ENCODE measurements at regions of chr10 and their contacts with region 1.

Region 1: DNA sequence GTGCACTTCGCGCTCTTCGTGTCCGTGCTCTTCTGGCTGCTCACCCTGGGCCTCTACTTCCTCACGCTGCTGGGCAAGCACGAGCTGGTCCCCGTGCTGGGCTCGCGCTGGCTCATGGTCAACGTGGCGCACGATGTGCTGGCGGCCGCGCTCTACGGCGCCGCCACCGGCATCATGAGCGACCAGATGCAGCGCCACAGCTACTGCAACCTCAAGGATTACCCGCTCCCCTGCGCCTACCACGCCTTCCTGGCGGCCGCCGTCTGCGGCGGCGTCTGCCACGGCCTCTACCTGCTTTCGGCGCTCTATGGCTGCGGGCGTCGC is 480 bp downstream of the MARVELD1 start:
- DNase-seq: peak; percentile 62
- ATAC-seq: peak; percentile 76
- H3K4me3 Mint-ChIP-seq: peak overlapping the region; percentile 98
- H3K27ac Mint-ChIP-seq: peak overlapping the region; percentile 92
- H3K4me1 Mint-ChIP-seq: peaks cover 6% of the 10 kb centered on the region
- H3K27me3 Mint-ChIP-seq: peaks cover 18% of the 10 kb centered on the region
- CTCF ChIP-seq: no peak

Region 2: GRCh38 chr10:97701438-97702069 is 12.5 kb before region 1 on chr10:
- CTCF ChIA-PET with region 1: interaction called, 65 read pairs
- POLR2A ChIA-PET with region 1: interaction called, 5 read pairs
- intact Hi-C with region 1: no loop called
- DNase-seq: peak; percentile 61
- ATAC-seq: peak; percentile 99
- H3K4me3 Mint-ChIP-seq: no peak overlapping the region
- H3K27ac Mint-ChIP-seq: no peak overlapping the region
- H3K4me1 Mint-ChIP-seq: no peaks in the 10 kb centered on the region
- H3K27me3 Mint-ChIP-seq: no peaks in the 10 kb centered on the region
- CTCF ChIP-seq: peak; percentile 89

Region 3: DNA sequence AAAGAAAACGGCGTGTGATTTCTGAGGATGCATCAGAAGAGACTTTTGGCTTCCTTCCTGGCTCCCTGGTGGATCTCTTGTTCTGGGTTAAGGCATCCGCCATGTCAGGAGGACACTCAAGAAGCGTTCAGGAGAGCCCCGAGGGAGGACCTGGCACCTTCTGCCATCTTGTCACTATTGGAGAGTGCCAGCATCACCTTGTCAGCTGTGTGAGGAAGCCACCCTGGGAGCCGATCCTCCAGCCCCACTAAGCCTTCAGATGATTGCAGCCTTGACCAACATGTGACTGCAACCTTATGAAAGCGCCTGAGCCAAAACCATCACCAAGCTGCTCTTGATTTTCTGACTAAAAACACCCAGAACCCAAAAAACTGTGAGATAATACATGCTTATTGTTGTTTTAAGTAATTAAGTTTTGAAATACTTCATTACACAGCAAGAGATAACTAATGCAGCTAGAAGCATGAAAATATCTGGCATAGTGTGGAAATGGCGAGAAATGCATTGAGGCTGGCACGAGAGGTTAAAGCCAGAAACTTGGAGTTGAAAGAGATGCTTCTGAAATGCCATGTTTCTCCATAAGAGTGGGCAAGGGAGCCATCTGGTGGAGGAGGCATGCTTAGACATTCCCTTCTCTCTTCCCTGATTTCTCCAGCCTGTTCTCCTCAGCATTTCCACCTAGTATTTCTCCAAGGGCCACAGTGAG is 17.5 kb after region 1 on chr10:
- CTCF ChIA-PET with region 1: interaction called, 537 read pairs
- POLR2A ChIA-PET with region 1: interaction called, 19 read pairs
- intact Hi-C with region 1: loop called (anchors 2 kb)
- DNase-seq: peak; percentile 69
- ATAC-seq: peak; percentile 58
- H3K4me3 Mint-ChIP-seq: no peak overlapping the region
- H3K27ac Mint-ChIP-seq: no peak overlapping the region
- H3K4me1 Mint-ChIP-seq: peaks cover 6% of the 10 kb centered on the region
- H3K27me3 Mint-ChIP-seq: peaks cover 3% of the 10 kb centered on the region
- CTCF ChIP-seq: peak; percentile 86

Region 4: DNA sequence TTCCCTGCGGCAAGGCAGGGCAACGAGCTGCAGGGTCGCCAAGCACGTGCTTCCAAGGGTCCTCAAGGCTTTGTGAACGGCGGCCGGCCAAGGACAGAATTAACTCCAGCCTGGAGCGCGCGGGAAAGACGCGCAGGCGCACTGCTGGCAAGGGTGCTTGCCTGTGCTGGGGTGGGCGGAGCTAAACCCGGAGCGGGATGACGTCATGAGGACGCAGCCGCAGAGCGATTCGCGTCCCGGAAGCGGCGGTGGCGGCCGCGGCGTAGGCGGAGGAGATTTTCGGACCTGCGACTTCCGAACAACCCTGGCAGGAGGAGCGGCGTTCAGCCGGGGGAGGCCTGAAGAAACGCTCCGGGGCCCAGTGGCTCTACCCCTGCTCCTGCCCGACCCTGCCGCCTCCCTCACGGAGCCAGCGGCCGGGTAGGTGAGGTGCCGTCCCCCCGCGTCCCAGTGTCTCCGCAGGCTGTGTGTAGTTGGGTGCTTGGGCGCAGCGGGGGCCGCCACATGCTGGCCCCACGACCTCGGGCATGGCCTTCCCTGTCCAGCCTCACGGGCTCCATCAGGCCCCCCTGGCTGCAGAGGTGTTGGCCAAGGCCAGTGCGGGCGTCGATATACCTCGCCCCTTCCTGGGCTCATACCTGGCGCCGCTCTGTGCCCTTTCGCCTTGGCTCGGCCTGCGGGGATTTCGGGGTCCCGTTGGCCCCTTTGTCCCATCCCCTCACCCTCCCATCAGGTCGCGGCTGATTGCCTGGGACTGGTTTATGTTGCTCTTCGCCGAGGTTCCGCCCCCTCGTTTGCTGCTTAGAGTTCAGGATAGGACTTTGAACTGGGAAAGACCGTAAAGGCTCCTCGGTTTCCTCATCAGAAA is 23.1 kb after region 1 on chr10 and contains the start of gene ZFYVE27:
- CTCF ChIA-PET with region 1: interaction called, 537 read pairs
- POLR2A ChIA-PET with region 1: interaction called, 7 read pairs
- intact Hi-C with region 1: no loop called
- DNase-seq: peak; percentile 98
- ATAC-seq: peak; percentile 95
- H3K4me3 Mint-ChIP-seq: peak within 1 kb of the TSS; percentile 85
- H3K27ac Mint-ChIP-seq: peak within 1 kb of the TSS; percentile 93
- H3K4me1 Mint-ChIP-seq: peaks cover 47% of the 10 kb centered on the region
- H3K27me3 Mint-ChIP-seq: no peaks in the 10 kb centered on the region
- CTCF ChIP-seq: no peak
- total RNA-seq, gene ZFYVE27: 18.1 to 20.1 TPM

Region 5: GRCh38 chr10:97743169-97743943 is 29.3 kb after region 1 on chr10:
- CTCF ChIA-PET with region 1: interaction called, 11 read pairs
- POLR2A ChIA-PET with region 1: interaction called, 5 read pairs
- intact Hi-C with region 1: no loop called
- DNase-seq: no peak
- ATAC-seq: no peak
- H3K4me3 Mint-ChIP-seq: no peak overlapping the region
- H3K27ac Mint-ChIP-seq: no peak overlapping the region
- H3K4me1 Mint-ChIP-seq: peaks cover 45% of the 10 kb centered on the region
- H3K27me3 Mint-ChIP-seq: no peaks in the 10 kb centered on the region
- CTCF ChIP-seq: no peak

Region 6: DNA sequence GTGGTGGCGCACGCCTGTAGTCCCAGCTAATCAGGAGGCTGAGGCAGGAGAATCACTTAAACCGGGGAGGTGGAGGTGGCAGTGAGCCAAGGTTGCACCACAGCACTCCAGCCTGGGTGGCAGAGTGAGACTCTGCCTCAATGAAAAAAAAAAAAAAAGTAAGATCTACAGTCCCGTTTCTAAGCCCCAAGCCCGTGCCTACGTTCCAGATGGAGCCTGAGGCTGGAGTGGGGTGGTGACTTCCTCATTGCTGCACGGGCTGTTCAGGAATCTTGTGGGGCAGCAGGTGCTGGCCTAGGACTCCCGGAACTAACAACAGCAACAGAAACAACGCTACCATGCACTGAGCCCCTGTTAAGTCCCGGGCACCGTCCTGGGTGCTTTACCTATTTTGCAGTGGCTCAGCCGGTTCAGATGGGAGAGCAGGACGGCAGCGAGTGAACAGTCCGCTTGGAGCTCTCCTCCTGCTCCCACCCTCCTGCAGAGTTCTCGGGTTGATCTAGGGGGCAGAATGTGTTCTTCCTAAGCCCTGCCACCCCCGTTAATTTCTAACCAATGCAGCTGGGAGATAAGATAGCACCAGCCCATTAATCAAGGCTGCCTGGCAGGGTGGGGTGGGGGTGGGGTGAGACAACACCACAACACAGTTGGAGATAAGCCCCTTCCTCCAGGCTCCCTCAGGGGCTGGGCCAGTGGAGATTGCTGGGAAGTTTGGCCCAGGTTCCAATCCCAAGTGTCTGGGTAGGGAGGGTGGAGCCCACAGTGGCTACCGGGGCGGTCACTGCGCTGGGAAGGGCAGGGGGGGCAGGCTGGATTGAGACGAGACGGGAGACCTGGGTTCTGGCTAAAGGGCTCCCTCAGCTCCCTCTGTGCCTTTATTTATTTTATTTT is 74.8 kb after region 1 on chr10:
- CTCF ChIA-PET with region 1: no interaction called
- POLR2A ChIA-PET with region 1: no interaction called
- intact Hi-C with region 1: no loop called
- DNase-seq: no peak
- ATAC-seq: no peak
- H3K4me3 Mint-ChIP-seq: no peak overlapping the region
- H3K27ac Mint-ChIP-seq: no peak overlapping the region
- H3K4me1 Mint-ChIP-seq: peaks cover 5% of the 10 kb centered on the region
- H3K27me3 Mint-ChIP-seq: no peaks in the 10 kb centered on the region
- CTCF ChIP-seq: no peak

Region 7: DNA sequence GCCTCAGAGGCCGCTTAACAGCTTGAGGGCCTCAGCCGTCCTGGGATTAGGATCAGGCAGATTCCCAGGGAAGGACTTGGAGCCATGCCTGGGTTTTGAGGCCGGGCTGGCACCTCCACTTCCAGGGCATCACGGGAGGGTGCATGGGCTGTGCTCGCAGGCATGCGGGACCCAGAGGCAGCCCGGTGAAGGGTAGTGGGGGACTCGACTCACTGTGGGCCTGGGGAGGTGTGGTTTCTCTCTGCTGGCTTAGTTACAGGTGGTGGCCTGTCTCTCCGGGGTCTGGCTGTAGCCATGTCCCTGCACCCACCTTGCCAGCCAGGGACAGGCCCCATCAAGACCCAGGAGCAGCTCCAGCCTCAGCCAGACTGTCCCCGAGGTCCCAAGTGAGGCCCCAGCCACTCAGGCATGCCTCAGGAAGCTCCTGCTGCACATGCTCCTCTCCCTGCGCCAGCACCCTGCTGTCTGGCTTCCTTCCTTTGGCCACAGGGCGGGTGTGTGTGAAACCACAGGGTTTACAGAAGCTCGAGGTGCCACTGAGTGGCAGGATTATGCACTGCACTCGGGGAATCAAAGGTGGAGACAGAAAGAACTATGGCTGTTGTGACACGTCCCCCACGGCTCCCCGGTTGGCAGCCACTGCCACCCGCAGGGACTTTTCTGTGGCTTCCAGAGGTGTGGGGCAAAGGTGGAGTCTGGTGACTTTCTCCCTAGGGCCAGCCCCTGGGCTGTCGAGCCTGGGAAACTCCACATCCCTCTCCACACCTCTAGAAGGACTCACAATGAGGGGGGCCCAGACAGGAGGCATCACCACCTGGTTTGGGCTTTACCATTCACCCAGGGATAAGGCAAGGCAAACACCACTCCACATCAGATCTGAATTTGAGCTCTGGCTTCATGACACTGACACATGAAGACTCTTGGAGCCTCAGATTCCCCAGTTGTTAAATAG is 155.4 kb after region 1 on chr10:
- CTCF ChIA-PET with region 1: interaction called, 11 read pairs
- POLR2A ChIA-PET with region 1: no interaction called
- intact Hi-C with region 1: no loop called
- DNase-seq: peak; percentile 95
- ATAC-seq: peak; percentile 100
- H3K4me3 Mint-ChIP-seq: peak overlapping the region; percentile 31
- H3K27ac Mint-ChIP-seq: peak overlapping the region; percentile 80
- H3K4me1 Mint-ChIP-seq: peaks cover 13% of the 10 kb centered on the region
- H3K27me3 Mint-ChIP-seq: no peaks in the 10 kb centered on the region
- CTCF ChIP-seq: peak; percentile 91

Measured in activated CD8-positive, alpha-beta T cell treated with anti-CD3 and anti-CD28 coated beads for 36 hours (primary cell).